ENCODE measurements at regions of chr18 and their contacts with region 1.

Region 1: GRCh38 chr18:24014062-24014985 is at the start of gene TTC39C:
- DNase-seq: peak; percentile 60 to 90 (median 74)
- ATAC-seq: peak; percentile 71
- H3K4me3 ChIP-seq: peak within 1 kb of the TSS; percentile 86
- H3K4me3 Mint-ChIP-seq: peak within 1 kb of the TSS; percentile 93 to 100 (median 98)
- H3K27ac ChIP-seq: peak within 1 kb of the TSS; percentile 84
- H3K27ac Mint-ChIP-seq: peak within 1 kb of the TSS; percentile 92 to 98 (median 95)
- H3K4me1 ChIP-seq: peaks cover 72 to 80% of the 10 kb centered on the region in 2 donors
- H3K4me1 Mint-ChIP-seq: peaks cover 58 to 84% (median 72%) of the 10 kb centered on the region in 7 donors
- H3K27me3 ChIP-seq: no peaks in the 10 kb centered on the region
- H3K27me3 Mint-ChIP-seq: no peaks in the 10 kb centered on the region
- total RNA-seq, gene TTC39C: 84.1 to 98.8 (median 91.4) TPM

Region 2: DNA sequence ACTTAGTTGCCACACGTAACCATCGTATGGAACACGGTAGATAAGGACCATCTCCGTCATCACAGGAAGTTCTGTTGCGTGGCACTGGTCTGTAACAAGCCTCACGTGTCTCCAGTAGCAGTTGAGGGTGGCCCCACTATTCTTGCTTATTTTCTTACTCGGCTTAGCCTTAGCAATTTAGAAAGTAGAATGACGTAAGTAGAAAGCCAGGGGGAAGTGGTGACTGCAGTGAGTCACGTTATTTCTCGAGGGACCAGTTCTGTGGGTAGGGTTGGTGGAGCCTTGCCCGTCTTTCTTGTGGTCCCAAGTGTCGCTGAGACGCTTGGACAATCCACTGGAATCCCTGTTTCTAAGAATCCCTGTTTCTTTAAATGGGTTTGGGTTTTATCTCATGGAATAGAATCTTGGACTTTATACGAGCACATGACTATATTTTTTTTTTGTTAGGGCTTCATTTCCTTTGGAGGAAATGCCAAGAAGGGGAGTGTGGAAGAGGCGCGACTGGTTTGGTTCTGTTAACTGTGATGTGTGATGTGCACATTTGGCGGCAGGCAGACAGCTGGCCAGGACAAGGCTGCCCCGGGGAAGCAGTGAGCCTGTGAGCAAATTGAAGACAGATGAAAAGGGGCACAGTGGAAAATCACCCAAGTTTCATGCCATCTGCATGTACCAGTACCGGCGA is 782.8 kb before region 1 on chr18:
- CTCF ChIA-PET with region 1: no interaction called
- POLR2A ChIA-PET with region 1: no interaction called
- intact Hi-C with region 1: loop called in 1 of 2 experiments (anchors 5 kb)
- DNase-seq: peak; percentile 14 to 86 (median 70)
- ATAC-seq: peak; percentile 93
- H3K4me3 ChIP-seq: peak overlapping the region; percentile 10
- H3K4me3 Mint-ChIP-seq: peak overlapping the region in 9 of 10 donors; percentile 7 to 80 (median 55)
- H3K27ac ChIP-seq: no peak overlapping the region
- H3K27ac Mint-ChIP-seq: peak overlapping the region; percentile 76 to 96 (median 88)
- H3K4me1 ChIP-seq: peaks cover 8 to 14% of the 10 kb centered on the region in 2 donors
- H3K4me1 Mint-ChIP-seq: peaks cover 0 to 78% (median 21%) of the 10 kb centered on the region in 7 donors
- H3K27me3 ChIP-seq: no peaks in the 10 kb centered on the region
- H3K27me3 Mint-ChIP-seq: no peaks in the 10 kb centered on the region

Region 3: DNA sequence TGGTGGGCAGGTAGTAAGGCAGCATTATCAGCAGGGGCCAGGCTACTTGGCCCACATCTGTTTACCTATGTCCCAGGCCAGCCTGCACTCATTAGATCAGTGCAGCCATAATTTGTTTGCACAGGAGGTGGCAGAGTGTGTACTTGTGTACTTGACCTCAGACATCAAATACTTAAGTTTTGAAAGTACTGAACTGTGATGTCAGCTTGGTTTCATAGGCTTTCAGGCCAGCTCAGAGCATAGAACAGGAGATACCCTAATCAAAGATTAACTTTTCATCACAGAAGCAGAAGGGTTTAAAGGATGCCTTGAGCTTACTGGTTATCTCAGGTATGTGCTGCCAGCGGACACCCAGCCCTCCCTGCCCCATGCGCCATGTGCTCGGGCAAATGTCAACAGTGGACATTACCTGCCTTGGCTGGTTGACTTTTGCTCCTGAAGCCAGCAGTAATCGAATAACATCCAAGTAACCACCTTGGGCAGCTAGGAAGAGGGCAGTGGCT is 384.8 kb before region 1 on chr18:
- CTCF ChIA-PET with region 1: no interaction called
- POLR2A ChIA-PET with region 1: no interaction called
- intact Hi-C with region 1: loop called in 1 of 2 experiments (anchors 10 kb)
- DNase-seq: no peak
- ATAC-seq: no peak
- H3K4me3 ChIP-seq: no peak overlapping the region
- H3K4me3 Mint-ChIP-seq: no peak overlapping the region
- H3K27ac ChIP-seq: no peak overlapping the region
- H3K27ac Mint-ChIP-seq: peak overlapping the region in 1 of 9 donors; percentile 45
- H3K4me1 ChIP-seq: no peaks in the 10 kb centered on the region
- H3K4me1 Mint-ChIP-seq: peaks cover 0 to 21% (median 4%) of the 10 kb centered on the region in 7 donors
- H3K27me3 ChIP-seq: no peaks in the 10 kb centered on the region
- H3K27me3 Mint-ChIP-seq: peaks cover 0 to 21% (median 4%) of the 10 kb centered on the region in 5 donors

Region 4: GRCh38 chr18:23861805-23862470 is 152.4 kb before region 1 on chr18:
- CTCF ChIA-PET with region 1: no interaction called
- POLR2A ChIA-PET with region 1: interaction called, 3 read pairs
- intact Hi-C with region 1: loop called in 1 of 2 experiments (anchors 2 kb)
- DNase-seq: no peak
- ATAC-seq: no peak
- H3K4me3 ChIP-seq: no peak overlapping the region
- H3K4me3 Mint-ChIP-seq: no peak overlapping the region
- H3K27ac ChIP-seq: no peak overlapping the region
- H3K27ac Mint-ChIP-seq: peak overlapping the region in 8 of 9 donors; percentile 13 to 73 (median 60)
- H3K4me1 ChIP-seq: peaks cover 24 to 25% of the 10 kb centered on the region in 2 donors
- H3K4me1 Mint-ChIP-seq: peaks cover 26 to 58% (median 45%) of the 10 kb centered on the region in 7 donors
- H3K27me3 ChIP-seq: no peaks in the 10 kb centered on the region
- H3K27me3 Mint-ChIP-seq: no peaks in the 10 kb centered on the region

Region 5: GRCh38 chr18:23943104-23943503 is 71.2 kb before region 1 on chr18:
- CTCF ChIA-PET with region 1: no interaction called
- POLR2A ChIA-PET with region 1: no interaction called
- intact Hi-C with region 1: loop called in 1 of 2 experiments (anchors 2 kb)
- DNase-seq: peak in 6 of 9 donors; percentile 13 to 51 (median 39)
- ATAC-seq: peak; percentile 65
- H3K4me3 ChIP-seq: peak overlapping the region; percentile 42
- H3K4me3 Mint-ChIP-seq: peak overlapping the region; percentile 67 to 82 (median 74)
- H3K27ac ChIP-seq: peak overlapping the region; percentile 31
- H3K27ac Mint-ChIP-seq: peak overlapping the region; percentile 61 to 92 (median 80)
- H3K4me1 ChIP-seq: peaks cover 7 to 23% of the 10 kb centered on the region in 2 donors
- H3K4me1 Mint-ChIP-seq: peaks cover 11 to 47% (median 44%) of the 10 kb centered on the region in 7 donors
- H3K27me3 ChIP-seq: no peaks in the 10 kb centered on the region
- H3K27me3 Mint-ChIP-seq: peaks cover 0 to 36% (median 0%) of the 10 kb centered on the region in 5 donors

Region 6: GRCh38 chr18:24051031-24051947 is 37.0 kb after region 1 on chr18:
- CTCF ChIA-PET with region 1: interaction called, 8 read pairs
- POLR2A ChIA-PET with region 1: interaction called, 3 read pairs
- intact Hi-C with region 1: loop called (anchors 1 to 2 kb)
- DNase-seq: no peak
- ATAC-seq: no peak
- H3K4me3 ChIP-seq: no peak overlapping the region
- H3K4me3 Mint-ChIP-seq: peak overlapping the region in 7 of 10 donors; percentile 16 to 50 (median 34)
- H3K27ac ChIP-seq: no peak overlapping the region
- H3K27ac Mint-ChIP-seq: peak overlapping the region in 8 of 9 donors; percentile 2 to 83 (median 51)
- H3K4me1 ChIP-seq: peaks cover 53 to 60% of the 10 kb centered on the region in 2 donors
- H3K4me1 Mint-ChIP-seq: peaks cover 49 to 96% (median 85%) of the 10 kb centered on the region in 7 donors
- H3K27me3 ChIP-seq: no peaks in the 10 kb centered on the region
- H3K27me3 Mint-ChIP-seq: no peaks in the 10 kb centered on the region

Measured in naive thymus-derived CD4-positive, alpha-beta T cell (primary cell).